ENCODE measurements at regions of chr10 and their contacts with region 1.

Region 1: GRCh38 chr10:4512671-4513240 is 313.3 kb upstream of the AKR1E2 start:
- H3K4me3 Mint-ChIP-seq: no peak overlapping the region
- H3K27ac Mint-ChIP-seq: peak overlapping the region; percentile 39
- H3K4me1 Mint-ChIP-seq: peaks cover 60% of the 10 kb centered on the region
- H3K27me3 Mint-ChIP-seq: peaks cover 2% of the 10 kb centered on the region

Region 2: GRCh38 chr10:4344511-4344994 is 168.2 kb before region 1 on chr10:
- intact Hi-C with region 1: loop called (anchors 10 kb)
- H3K4me3 Mint-ChIP-seq: no peak overlapping the region
- H3K27ac Mint-ChIP-seq: peak overlapping the region; percentile 91
- H3K4me1 Mint-ChIP-seq: peaks cover 32% of the 10 kb centered on the region
- H3K27me3 Mint-ChIP-seq: peaks cover 2% of the 10 kb centered on the region

Region 3: GRCh38 chr10:4546500-4546899 is 33.7 kb after region 1 on chr10:
- intact Hi-C with region 1: loop called (anchors 5 kb)
- H3K4me3 Mint-ChIP-seq: no peak overlapping the region
- H3K27ac Mint-ChIP-seq: no peak overlapping the region
- H3K4me1 Mint-ChIP-seq: peaks cover 23% of the 10 kb centered on the region
- H3K27me3 Mint-ChIP-seq: no peaks in the 10 kb centered on the region

Region 4: DNA sequence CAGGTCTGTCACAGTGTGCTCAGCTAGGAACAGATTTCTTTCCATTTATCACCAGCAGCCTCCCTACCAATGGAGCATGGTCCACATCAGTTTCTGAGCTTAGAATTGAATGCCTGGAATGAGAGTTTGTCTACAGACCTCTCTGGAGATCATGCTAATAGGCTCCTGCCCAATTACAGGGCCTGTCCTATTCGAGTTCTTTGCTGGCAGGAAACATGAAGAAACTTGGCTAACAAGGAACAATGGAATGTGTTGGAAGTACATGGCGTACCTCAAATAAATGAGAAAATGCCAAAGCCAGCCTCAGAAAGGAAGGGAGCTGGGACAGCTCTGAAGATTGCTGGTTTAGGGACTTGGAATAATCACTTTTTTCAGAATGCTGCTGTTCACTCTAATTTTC is 127.2 kb after region 1 on chr10:
- intact Hi-C with region 1: loop called (anchors 5 kb)
- H3K4me3 Mint-ChIP-seq: no peak overlapping the region
- H3K27ac Mint-ChIP-seq: no peak overlapping the region
- H3K4me1 Mint-ChIP-seq: no peaks in the 10 kb centered on the region
- H3K27me3 Mint-ChIP-seq: no peaks in the 10 kb centered on the region

Region 5: DNA sequence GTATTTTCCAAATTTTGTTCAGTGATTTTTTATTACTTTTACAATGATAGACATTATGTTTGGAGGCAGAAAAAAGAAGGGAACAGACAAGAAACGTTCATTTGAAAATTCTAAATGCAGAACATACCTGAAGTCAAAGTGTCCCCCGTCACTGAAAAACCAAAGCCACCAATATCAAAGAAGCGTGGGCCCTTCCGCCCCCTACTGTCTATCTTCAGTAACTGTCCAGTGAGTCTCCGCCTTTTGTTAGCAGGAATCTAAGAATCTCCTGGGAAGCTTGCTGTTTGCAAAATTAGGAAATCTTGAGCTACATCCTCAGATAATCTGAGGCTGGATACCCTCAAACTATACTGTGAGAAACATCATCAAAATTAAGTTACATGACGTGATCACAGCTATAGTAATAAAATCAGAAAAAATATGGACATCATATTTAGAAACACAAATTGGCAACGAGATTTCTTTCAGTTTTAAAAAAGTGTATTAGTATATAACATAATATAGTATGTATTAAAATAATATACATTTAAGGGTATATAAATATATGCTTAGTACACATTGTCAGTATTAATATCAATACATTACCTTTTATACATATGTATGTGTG is 143.9 kb after region 1 on chr10:
- intact Hi-C with region 1: loop called (anchors 5 kb)
- H3K4me3 Mint-ChIP-seq: no peak overlapping the region
- H3K27ac Mint-ChIP-seq: no peak overlapping the region
- H3K4me1 Mint-ChIP-seq: no peaks in the 10 kb centered on the region
- H3K27me3 Mint-ChIP-seq: peaks cover 9% of the 10 kb centered on the region